Panc1 (cell line): ENCODE measurements at regions of chr9 and their contacts with region 1.

Region 1: GRCh38 chr9:121992571-121993212 is 100.4 kb downstream of the TTLL11 start:
- DNase-seq: peak; percentile 22
- ATAC-seq: peak; percentile 94
- H3K4me3 ChIP-seq: no peak overlapping the region
- H3K27ac ChIP-seq: no peak overlapping the region
- H3K4me1 ChIP-seq: no peaks in the 10 kb centered on the region
- H3K27me3 ChIP-seq: no peaks in the 10 kb centered on the region
- CTCF ChIP-seq: peak; percentile 75

Region 2: GRCh38 chr9:121545875-121546423 is 446.7 kb before region 1 on chr9:
- CTCF ChIA-PET with region 1: interaction called, 4 read pairs
- POLR2A ChIA-PET with region 1: no interaction called
- in situ Hi-C with region 1: no loop called
- intact Hi-C with region 1: loop called (anchors 1 kb)
- DNase-seq: peak; percentile 52
- ATAC-seq: peak; percentile 98
- H3K4me3 ChIP-seq: peak overlapping the region in 1 of 2 experiments; percentile 30; a peak in 1 of 4 replicates
- H3K27ac ChIP-seq: no peak overlapping the region
- H3K4me1 ChIP-seq: no peaks in the 10 kb centered on the region
- H3K27me3 ChIP-seq: no peaks in the 10 kb centered on the region
- CTCF ChIP-seq: peak; percentile 93

Region 3: DNA sequence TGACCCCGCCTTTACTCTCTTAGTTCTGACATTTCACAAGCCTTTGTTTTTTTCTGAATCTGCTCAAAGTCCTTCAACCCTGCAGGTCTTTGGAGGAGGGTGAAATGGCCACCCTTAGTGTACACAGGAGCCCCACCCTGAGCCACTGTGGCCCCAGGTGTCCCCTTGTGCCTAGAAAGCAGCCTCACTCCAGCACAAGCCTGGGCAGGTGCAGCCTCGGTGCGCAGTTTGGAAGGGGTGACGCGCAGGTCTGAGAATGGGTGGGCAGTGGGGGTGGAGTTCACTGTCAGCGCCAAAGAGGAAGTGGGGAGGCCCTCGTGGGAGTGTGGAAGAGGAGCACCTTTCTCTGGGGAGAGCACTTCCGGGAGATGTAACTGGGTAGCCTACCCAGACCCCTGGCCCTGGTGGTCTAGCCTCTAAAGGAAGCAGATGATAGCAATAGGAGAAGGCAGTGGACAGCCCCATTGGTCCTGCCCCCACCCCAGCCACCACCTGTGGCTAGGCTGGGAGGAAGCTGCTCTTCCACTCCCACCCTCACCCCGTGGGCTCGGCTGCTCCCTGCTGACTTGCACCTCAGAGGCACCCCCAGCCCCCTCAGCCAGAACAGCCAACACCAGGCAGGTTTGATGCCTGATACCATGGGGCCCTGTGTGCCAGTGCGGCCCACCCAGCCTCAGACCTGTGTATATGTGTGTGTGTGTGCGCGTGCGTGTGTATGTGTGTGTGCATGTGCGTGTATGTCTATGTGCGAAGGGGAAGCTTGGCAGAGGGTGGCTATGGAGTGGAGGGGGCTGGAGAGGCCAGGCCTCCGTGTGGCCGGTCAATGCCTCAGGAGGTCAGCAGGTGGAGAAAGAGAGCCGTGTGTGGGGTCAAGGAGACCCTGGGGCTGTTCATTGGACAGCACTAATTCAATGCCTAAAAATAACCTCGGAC is 358.1 kb before region 1 on chr9:
- CTCF ChIA-PET with region 1: no interaction called
- POLR2A ChIA-PET with region 1: no interaction called
- in situ Hi-C with region 1: no loop called
- intact Hi-C with region 1: loop called (anchors 10 kb)
- DNase-seq: no peak
- ATAC-seq: peak; percentile 88
- H3K4me3 ChIP-seq: no peak overlapping the region
- H3K27ac ChIP-seq: no peak overlapping the region
- H3K4me1 ChIP-seq: no peaks in the 10 kb centered on the region
- H3K27me3 ChIP-seq: no peaks in the 10 kb centered on the region
- CTCF ChIP-seq: peak; percentile 82

Region 4: DNA sequence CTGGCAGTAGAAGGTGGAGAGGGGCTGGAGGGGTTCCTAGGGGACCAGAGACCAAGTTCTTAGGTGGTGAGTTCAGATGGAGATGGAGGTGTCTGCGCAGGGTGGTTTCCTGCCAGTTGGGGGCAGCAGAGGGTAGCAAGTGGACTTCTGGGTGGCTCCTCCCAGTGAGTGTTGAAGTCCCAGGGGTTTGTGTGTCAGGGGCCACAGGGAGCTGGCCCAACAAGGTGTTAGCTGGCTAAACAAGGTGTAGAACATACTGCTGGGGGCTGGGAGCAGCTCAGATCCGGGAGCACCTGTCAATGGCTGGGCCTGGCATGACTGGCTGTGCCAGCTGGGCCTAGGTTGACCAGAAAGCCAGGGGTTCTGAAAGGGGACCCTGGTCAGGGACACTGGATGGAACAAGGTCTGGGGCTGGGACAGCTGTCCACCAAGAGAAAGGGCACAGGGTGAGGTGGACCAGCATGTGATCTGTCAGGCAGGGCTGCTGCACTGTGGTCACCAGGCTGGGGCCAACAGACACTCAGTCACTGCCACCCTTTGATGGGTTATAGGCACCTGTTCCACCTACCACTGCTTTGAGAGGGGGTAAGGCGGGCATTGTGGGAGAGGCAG is 305.7 kb before region 1 on chr9:
- CTCF ChIA-PET with region 1: interaction called, 3 read pairs
- POLR2A ChIA-PET with region 1: no interaction called
- in situ Hi-C with region 1: no loop called
- intact Hi-C with region 1: loop called (anchors 5 kb)
- DNase-seq: peak; percentile 42
- ATAC-seq: peak; percentile 83
- H3K4me3 ChIP-seq: no peak overlapping the region
- H3K27ac ChIP-seq: no peak overlapping the region
- H3K4me1 ChIP-seq: no peaks in the 10 kb centered on the region
- H3K27me3 ChIP-seq: no peaks in the 10 kb centered on the region
- CTCF ChIP-seq: peak; percentile 87

Region 5: DNA sequence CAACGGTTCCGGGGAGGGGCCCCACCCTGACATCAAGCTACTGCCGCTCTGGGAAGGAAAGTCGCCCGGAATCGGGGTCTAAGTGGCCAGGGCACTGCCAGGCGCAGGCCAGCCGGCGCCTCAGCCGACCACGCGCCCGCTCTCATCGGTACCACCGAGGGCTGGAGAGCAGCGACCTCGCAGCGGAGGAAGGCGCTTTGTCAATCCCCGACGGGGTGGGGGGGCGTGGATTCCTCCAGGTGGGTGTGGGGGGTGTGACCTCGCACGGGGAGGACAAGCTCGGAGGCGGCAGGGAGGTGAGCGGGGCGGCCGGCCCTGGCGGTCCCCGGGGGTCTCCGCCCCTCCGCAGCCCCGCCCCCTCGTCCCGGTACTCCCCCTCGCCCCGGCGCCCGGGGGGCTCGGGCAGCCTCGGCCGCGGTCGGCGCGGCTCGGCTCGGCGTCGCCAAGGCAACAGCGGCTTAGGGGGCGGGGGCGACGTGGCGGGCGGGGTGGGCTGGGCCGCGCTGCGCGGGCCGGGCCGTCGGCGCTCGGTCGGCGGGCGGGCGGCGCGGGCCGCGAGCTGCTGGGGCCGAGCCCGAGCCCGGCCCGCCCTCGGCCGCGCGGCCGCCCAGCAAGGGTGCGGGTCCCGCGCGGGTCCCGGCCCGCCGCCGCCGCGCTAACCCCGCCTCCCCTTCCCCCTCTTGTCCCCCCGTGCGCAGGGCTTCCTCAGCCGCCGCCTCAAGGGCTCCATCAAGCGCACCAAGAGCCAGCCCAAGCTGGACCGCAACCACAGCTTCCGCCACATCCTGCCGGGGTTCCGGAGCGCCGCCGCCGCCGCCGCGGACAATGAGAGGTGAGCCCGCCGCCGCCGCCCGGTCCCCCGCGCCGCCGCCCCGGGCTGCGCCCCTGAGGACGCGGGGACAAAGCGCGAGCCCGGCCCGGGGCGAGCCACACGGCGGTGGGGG is 293.8 kb before region 1 on chr9:
- CTCF ChIA-PET with region 1: no interaction called
- POLR2A ChIA-PET with region 1: no interaction called
- in situ Hi-C with region 1: no loop called
- intact Hi-C with region 1: loop called (anchors 2 kb)
- DNase-seq: no peak
- ATAC-seq: peak; percentile 80
- H3K4me3 ChIP-seq: peak overlapping the region; percentile 42 to 51
- H3K27ac ChIP-seq: no peak overlapping the region
- H3K4me1 ChIP-seq: no peaks in the 10 kb centered on the region; the same call in none of the 2 replicates
- H3K27me3 ChIP-seq: no peaks in the 10 kb centered on the region
- CTCF ChIP-seq: no peak

Region 6: GRCh38 chr9:121744002-121744686 is 248.5 kb before region 1 on chr9:
- CTCF ChIA-PET with region 1: no interaction called
- POLR2A ChIA-PET with region 1: no interaction called
- in situ Hi-C with region 1: no loop called
- intact Hi-C with region 1: loop called (anchors 5 kb)
- DNase-seq: no peak
- ATAC-seq: peak; percentile 82
- H3K4me3 ChIP-seq: peak overlapping the region; percentile 44 to 53
- H3K27ac ChIP-seq: peak overlapping the region; percentile 70
- H3K4me1 ChIP-seq: peaks cover 22% of the 10 kb centered on the region
- H3K27me3 ChIP-seq: no peaks in the 10 kb centered on the region
- CTCF ChIP-seq: peak; percentile 80

Region 7: GRCh38 chr9:121902461-121903135 is 90.1 kb before region 1 on chr9:
- CTCF ChIA-PET with region 1: no interaction called
- POLR2A ChIA-PET with region 1: no interaction called
- in situ Hi-C with region 1: no loop called
- intact Hi-C with region 1: no loop called
- DNase-seq: no peak
- ATAC-seq: no peak
- H3K4me3 ChIP-seq: no peak overlapping the region
- H3K27ac ChIP-seq: no peak overlapping the region
- H3K4me1 ChIP-seq: no peaks in the 10 kb centered on the region
- H3K27me3 ChIP-seq: no peaks in the 10 kb centered on the region
- CTCF ChIP-seq: no peak